Naive thymus-derived CD4-positive, alpha-beta T cell (primary cell): ENCODE measurements at regions of chr6 and their contacts with region 1.

Region 1: DNA sequence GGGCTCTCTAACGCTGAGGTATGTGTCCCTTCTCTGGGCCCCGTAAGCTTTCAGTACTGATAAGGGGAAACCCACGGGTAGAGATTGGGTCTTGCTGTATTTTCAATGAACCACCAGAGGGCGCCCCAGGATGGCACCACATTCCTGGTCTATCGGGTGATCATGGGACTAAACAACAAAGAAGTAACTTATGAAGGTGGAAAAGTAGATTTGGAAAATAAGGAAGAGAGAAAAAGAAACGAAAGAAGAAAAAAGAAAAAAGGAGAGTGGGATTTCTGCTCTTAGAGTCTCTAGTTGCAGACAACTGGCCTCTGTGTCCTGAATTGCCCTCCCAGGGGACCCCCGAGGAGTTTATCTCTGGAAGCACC is 93.8 kb downstream of the GMPR start:
- DNase-seq: peak; percentile 51 to 80 (median 73)
- ATAC-seq: peak; percentile 96
- H3K4me3 ChIP-seq: peak overlapping the region; percentile 19
- H3K4me3 Mint-ChIP-seq: no peak overlapping the region
- H3K27ac ChIP-seq: peak overlapping the region; percentile 32
- H3K27ac Mint-ChIP-seq: no peak overlapping the region
- H3K4me1 ChIP-seq: peaks cover 12 to 13% of the 10 kb centered on the region in 2 donors
- H3K4me1 Mint-ChIP-seq: peaks cover 0 to 6% (median 0%) of the 10 kb centered on the region in 7 donors
- H3K27me3 ChIP-seq: no peaks in the 10 kb centered on the region
- H3K27me3 Mint-ChIP-seq: no peaks in the 10 kb centered on the region

Region 2: GRCh38 chr6:15682965-15683822 is 649.0 kb before region 1 on chr6:
- CTCF ChIA-PET with region 1: no interaction called
- POLR2A ChIA-PET with region 1: no interaction called
- intact Hi-C with region 1: no loop called
- DNase-seq: no peak
- ATAC-seq: no peak
- H3K4me3 ChIP-seq: no peak overlapping the region
- H3K4me3 Mint-ChIP-seq: no peak overlapping the region
- H3K27ac ChIP-seq: no peak overlapping the region
- H3K27ac Mint-ChIP-seq: no peak overlapping the region
- H3K4me1 ChIP-seq: no peaks in the 10 kb centered on the region
- H3K4me1 Mint-ChIP-seq: peaks cover 0 to 3% (median 0%) of the 10 kb centered on the region in 7 donors
- H3K27me3 ChIP-seq: no peaks in the 10 kb centered on the region
- H3K27me3 Mint-ChIP-seq: peaks cover 0 to 17% (median 9%) of the 10 kb centered on the region in 5 donors

Region 3: GRCh38 chr6:16372029-16372776 is 40.0 kb after region 1 on chr6:
- CTCF ChIA-PET with region 1: no interaction called
- POLR2A ChIA-PET with region 1: no interaction called
- intact Hi-C with region 1: no loop called
- DNase-seq: no peak
- ATAC-seq: no peak
- H3K4me3 ChIP-seq: no peak overlapping the region
- H3K4me3 Mint-ChIP-seq: no peak overlapping the region
- H3K27ac ChIP-seq: no peak overlapping the region
- H3K27ac Mint-ChIP-seq: no peak overlapping the region
- H3K4me1 ChIP-seq: no peaks in the 10 kb centered on the region
- H3K4me1 Mint-ChIP-seq: peaks cover 0 to 11% (median 4%) of the 10 kb centered on the region in 7 donors
- H3K27me3 ChIP-seq: no peaks in the 10 kb centered on the region
- H3K27me3 Mint-ChIP-seq: no peaks in the 10 kb centered on the region

Region 4: GRCh38 chr6:16496991-16497801 is 165.0 kb after region 1 on chr6:
- CTCF ChIA-PET with region 1: no interaction called
- POLR2A ChIA-PET with region 1: no interaction called
- intact Hi-C with region 1: loop called in 1 of 2 experiments (anchors 2 kb)
- DNase-seq: no peak
- ATAC-seq: no peak
- H3K4me3 ChIP-seq: no peak overlapping the region
- H3K4me3 Mint-ChIP-seq: no peak overlapping the region
- H3K27ac ChIP-seq: no peak overlapping the region
- H3K27ac Mint-ChIP-seq: peak overlapping the region in 2 of 9 donors; percentile 2 to 14
- H3K4me1 ChIP-seq: no peaks in the 10 kb centered on the region
- H3K4me1 Mint-ChIP-seq: peaks cover 11 to 51% (median 21%) of the 10 kb centered on the region in 7 donors
- H3K27me3 ChIP-seq: no peaks in the 10 kb centered on the region
- H3K27me3 Mint-ChIP-seq: no peaks in the 10 kb centered on the region

Region 5: DNA sequence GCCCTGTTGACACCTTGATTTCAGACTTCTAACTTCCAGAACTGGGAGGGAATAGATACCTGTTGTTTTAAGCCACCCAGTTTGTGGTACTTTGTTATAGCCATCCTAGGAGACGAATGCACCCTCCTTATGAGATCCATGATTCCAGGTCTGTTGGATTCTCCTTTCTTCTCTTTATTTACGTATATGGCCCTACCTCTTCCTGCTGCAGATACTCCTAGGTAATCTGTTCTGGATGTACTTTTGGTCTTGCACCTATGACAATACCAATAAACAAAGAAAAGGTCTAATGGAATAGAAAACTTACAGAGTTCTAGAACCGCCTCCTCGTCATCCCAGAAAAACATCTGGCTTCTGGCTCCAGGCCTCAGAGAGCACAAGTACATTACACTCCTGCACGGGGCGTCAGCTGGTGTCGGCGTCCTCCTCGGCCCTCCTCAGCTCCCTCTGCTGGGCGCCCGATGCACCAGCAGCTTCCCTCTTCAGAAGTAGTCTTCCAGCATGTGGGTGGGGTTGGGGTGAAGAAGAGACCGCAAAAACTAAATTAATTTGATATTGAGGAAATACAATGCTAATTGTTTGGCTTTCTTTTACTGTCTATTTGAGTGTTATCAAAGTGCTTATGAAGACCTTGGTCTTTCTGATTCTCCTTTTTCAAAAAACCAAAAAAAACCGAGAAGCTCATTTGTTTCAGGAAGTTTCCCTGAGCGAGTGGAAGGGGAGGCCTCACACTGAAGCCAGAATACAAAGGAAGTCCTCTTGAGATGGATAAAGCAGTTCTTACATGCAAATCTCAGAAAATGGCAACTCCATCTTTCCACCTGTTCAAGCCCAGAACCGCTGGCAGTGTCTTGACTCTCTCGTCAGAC is 438.8 kb after region 1 on chr6:
- CTCF ChIA-PET with region 1: interaction called, 25 read pairs
- POLR2A ChIA-PET with region 1: no interaction called
- intact Hi-C with region 1: loop called (anchors 1 kb)
- DNase-seq: peak; percentile 56 to 79 (median 73)
- ATAC-seq: peak; percentile 95
- H3K4me3 ChIP-seq: no peak overlapping the region
- H3K4me3 Mint-ChIP-seq: peak overlapping the region in 4 of 10 donors; percentile 22 to 65 (median 41)
- H3K27ac ChIP-seq: no peak overlapping the region
- H3K27ac Mint-ChIP-seq: peak overlapping the region in 6 of 9 donors; percentile 3 to 86 (median 75)
- H3K4me1 ChIP-seq: peaks cover 24 to 34% of the 10 kb centered on the region in 2 donors
- H3K4me1 Mint-ChIP-seq: peaks cover 25 to 51% (median 42%) of the 10 kb centered on the region in 7 donors
- H3K27me3 ChIP-seq: no peaks in the 10 kb centered on the region
- H3K27me3 Mint-ChIP-seq: peaks cover 0 to 5% (median 0%) of the 10 kb centered on the region in 5 donors

Region 6: DNA sequence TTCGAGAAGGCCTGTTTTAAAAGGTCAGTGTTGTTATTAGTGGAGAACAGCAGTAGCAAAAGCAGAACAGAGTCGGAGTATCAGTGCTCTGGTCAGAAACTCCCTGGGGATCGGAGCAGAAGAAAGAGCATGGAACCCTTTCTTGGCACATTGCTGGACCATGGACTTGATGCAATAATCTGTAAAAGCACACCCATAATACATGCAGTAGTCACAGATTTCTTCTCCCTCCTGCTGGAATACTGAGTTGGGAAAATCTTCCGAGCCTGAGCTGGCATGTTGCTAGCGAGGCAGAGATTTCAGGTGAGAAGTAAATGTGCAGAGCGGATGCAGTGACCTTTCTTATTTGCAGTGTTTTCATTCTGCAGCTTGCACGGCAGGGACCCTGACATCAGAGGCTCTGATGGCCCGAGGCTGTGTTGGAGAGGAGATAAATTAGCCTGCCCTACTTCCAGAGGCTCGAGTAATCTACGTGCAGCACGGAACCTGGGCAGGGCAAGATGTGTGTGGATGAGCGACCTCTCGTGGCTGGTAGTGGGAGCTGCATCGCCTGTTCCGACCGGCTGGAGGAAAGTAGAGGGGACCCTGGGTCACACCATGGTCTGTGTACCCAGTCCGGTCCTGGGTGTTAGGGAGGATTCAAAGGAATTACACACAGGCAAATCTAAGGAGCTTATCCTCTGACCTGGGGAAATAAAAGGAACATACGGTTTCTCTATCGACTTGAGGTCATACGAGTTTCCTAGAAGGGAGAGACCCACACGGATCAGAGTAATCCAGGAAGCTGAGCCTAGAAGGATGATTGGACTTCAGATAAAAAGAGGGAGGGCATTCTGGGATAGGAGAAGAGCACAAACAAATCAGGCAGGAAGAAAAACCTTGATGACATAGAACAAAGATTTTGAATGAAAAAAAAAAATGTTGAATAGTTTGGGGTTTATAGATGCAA is 632.7 kb after region 1 on chr6:
- CTCF ChIA-PET with region 1: no interaction called
- POLR2A ChIA-PET with region 1: no interaction called
- intact Hi-C with region 1: loop called (anchors 1 kb)
- DNase-seq: peak in 8 of 9 donors; percentile 8 to 66 (median 24)
- ATAC-seq: peak; percentile 90
- H3K4me3 ChIP-seq: peak overlapping the region; percentile 2
- H3K4me3 Mint-ChIP-seq: peak overlapping the region in 1 of 10 donors; percentile 5
- H3K27ac ChIP-seq: no peak overlapping the region
- H3K27ac Mint-ChIP-seq: no peak overlapping the region
- H3K4me1 ChIP-seq: no peaks in the 10 kb centered on the region
- H3K4me1 Mint-ChIP-seq: peaks cover 4 to 10% (median 5%) of the 10 kb centered on the region in 7 donors
- H3K27me3 ChIP-seq: no peaks in the 10 kb centered on the region
- H3K27me3 Mint-ChIP-seq: peaks cover 13 to 28% (median 24%) of the 10 kb centered on the region in 5 donors